ENCODE measurements at regions of chr5 and their contacts with region 1.

Region 1: DNA sequence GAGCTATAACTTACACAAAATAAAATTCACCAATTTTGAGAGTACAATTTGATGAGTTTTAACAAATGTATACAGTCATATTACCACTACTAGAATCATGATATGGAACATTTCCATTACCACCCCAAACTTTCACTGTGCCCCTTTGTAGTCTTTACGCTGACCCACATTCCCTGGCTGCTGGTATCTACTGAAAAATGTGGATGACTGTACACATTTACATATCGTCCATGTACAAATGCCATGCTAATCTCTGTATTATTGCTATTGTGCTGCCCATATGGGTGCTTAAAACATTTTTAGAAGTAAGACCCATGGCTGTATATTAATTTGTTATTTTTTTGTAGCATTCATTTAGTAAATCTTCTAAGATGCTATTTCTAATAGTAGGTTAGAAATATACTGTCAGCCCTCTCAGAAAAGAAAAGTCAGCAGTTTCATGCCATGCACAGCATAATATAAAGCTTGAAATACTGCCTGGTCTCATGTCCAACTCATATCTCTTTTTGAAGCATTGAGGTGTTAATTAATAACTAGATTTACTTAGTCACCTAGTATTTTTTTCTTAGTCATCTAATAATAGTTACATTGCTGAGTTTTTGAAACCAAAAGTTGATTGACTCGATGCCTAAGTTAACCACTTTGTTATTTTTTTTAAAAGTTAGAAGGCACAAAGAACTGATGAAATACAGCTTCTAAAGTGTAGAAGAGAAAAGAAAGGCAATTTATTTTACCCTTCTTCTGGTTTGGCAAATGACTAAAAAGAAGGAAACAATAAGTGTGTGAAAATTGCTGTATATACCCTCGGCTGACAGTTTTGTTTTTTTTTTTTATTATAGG is 188.3 kb upstream of the MEF2C start:
- DNase-seq: peak; percentile 33
- ATAC-seq: peak; percentile 92
- H3K4me3 ChIP-seq: peak overlapping the region; percentile 58
- H3K27ac ChIP-seq: peak overlapping the region; percentile 92
- H3K4me1 ChIP-seq: peaks cover 14% of the 10 kb centered on the region
- H3K27me3 ChIP-seq: no peaks in the 10 kb centered on the region
- CTCF ChIP-seq: no peak
- EP300 ChIP-seq: peak; percentile 52 to 66; a peak in 2 of 4 replicates
- POLR2A ChIP-seq: no peak
- RAD21 ChIP-seq: 0 out of 2 replicates have a peak, but pooled peaks have one; percentile 2

Region 2: DNA sequence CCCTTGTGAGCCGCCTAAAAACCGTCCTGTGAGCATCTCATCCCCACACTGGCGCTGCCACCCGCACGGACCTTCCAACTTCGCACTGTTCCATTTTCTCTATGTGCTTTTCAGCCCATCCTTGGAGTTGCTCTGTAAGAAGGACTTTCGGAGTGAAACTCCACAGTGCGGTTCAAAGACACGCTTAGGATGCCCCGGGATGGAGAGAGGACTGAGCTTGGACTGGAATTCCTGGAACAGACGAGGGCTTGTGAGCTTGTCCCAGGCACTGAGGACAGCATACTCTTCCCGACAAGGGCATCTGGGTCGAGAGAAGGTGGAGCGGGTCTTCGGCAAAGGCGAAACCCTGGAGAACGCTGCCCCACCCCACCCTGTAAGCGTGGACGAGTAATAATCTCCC is 376.1 kb before region 1 on chr5:
- CTCF ChIA-PET with region 1: no interaction called
- POLR2A ChIA-PET with region 1: no interaction called
- RAD21 ChIA-PET with region 1: no interaction called
- SMC1A ChIA-PET with region 1: no interaction called
- in situ Hi-C with region 1: no loop called
- intact Hi-C with region 1: no loop called
- DNase-seq: no peak
- ATAC-seq: no peak
- H3K4me3 ChIP-seq: no peak overlapping the region
- H3K27ac ChIP-seq: no peak overlapping the region
- H3K4me1 ChIP-seq: no peaks in the 10 kb centered on the region; the same call in 1 of the 2 replicates
- H3K27me3 ChIP-seq: peaks cover 18 to 23% of the 10 kb centered on the region in 2 experiments
- CTCF ChIP-seq: no peak
- EP300 ChIP-seq: no peak
- POLR2A ChIP-seq: no peak
- RAD21 ChIP-seq: no peak

Region 3: GRCh38 chr5:89081360-89081759 is 10.0 kb after region 1 on chr5:
- CTCF ChIA-PET with region 1: interaction called, 10 read pairs
- POLR2A ChIA-PET with region 1: interaction called, 7 read pairs
- RAD21 ChIA-PET with region 1: interaction called, 21 read pairs
- SMC1A ChIA-PET with region 1: interaction called, 52 read pairs
- in situ Hi-C with region 1: no loop called
- intact Hi-C with region 1: no loop called
- DNase-seq: peak; percentile 62
- ATAC-seq: peak; percentile 89
- H3K4me3 ChIP-seq: peak overlapping the region; percentile 3; the same call in 1 of the 2 replicates
- H3K27ac ChIP-seq: peak overlapping the region; percentile 55
- H3K4me1 ChIP-seq: peaks cover 11% of the 10 kb centered on the region
- H3K27me3 ChIP-seq: no peaks in the 10 kb centered on the region
- CTCF ChIP-seq: peak in 1 of 3 experiments; percentile 36; a peak in 2 of 6 replicates
- EP300 ChIP-seq: 0 out of 4 replicates have a peak, but pooled peaks of 1 of the 2 experiments have one; percentile 21
- POLR2A ChIP-seq: no peak
- RAD21 ChIP-seq: peak; percentile 54

Region 4: DNA sequence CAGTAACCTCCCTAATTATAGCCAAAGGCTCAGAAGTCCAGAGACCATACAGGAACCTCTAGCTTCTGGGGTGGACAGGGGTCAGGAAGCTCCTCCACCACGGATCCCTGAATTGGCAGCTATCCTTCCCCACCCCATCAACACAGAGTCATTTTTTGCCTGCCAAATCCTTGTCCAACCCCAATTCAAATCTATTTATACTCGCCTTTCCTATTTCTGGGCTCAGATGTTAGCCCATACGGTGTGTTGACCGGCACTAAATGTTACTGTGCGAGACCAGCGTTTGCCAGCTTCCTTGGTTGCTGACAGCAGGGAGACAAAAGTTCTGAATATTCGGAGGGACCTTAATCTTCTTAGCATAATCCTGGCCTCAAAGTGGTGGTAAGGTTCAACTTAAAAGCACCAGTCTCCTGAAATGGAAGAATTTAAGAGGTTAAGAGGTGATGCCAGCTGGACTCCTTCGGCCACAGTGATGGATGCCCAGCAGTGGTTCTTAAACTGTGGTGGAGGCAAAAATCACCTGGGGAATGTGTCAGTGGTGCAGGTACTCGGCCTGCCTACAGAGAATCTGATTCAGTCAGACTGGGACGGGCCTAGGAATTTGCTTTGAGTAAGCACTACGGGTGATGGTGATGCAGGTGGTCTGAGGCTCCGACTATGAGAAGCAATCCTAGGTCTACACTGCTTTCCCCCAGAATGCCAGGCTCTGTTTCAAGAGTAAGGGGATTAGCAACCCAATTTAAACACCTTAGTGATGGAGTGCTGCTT is 16.4 kb after region 1 on chr5:
- CTCF ChIA-PET with region 1: interaction called, 10 read pairs
- POLR2A ChIA-PET with region 1: interaction called, 8 read pairs
- RAD21 ChIA-PET with region 1: interaction called, 13 read pairs
- SMC1A ChIA-PET with region 1: interaction called, 56 read pairs
- in situ Hi-C with region 1: no loop called
- intact Hi-C with region 1: no loop called
- DNase-seq: no peak
- ATAC-seq: peak; percentile 36; the same call in 2 of the 3 replicates
- H3K4me3 ChIP-seq: no peak overlapping the region
- H3K27ac ChIP-seq: no peak overlapping the region
- H3K4me1 ChIP-seq: no peaks in the 10 kb centered on the region
- H3K27me3 ChIP-seq: no peaks in the 10 kb centered on the region
- CTCF ChIP-seq: no peak
- EP300 ChIP-seq: no peak
- POLR2A ChIP-seq: no peak
- RAD21 ChIP-seq: no peak

Region 5: DNA sequence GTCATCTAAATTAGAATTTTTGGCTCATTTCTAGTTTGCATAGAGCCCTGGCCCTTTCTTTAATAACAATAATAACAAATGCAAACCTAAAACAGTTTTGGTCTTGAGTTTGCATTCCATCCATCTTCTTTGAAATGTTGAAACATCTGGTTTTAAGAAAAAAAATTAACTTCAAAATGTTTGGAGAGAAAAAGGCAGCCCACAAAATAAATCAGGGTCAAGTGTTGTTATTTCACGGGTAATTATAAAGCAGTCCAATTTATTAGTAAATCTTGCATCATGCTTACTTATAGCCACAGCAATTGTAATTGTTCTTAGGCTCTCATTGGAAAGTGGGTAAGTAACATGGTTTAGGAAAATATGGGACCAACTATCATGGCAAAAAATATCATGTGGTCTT is 58.6 kb after region 1 on chr5:
- CTCF ChIA-PET with region 1: no interaction called
- POLR2A ChIA-PET with region 1: no interaction called
- RAD21 ChIA-PET with region 1: no interaction called
- SMC1A ChIA-PET with region 1: no interaction called
- in situ Hi-C with region 1: no loop called
- intact Hi-C with region 1: no loop called
- DNase-seq: no peak
- ATAC-seq: no peak
- H3K4me3 ChIP-seq: no peak overlapping the region
- H3K27ac ChIP-seq: no peak overlapping the region
- H3K4me1 ChIP-seq: no peaks in the 10 kb centered on the region
- H3K27me3 ChIP-seq: no peaks in the 10 kb centered on the region
- CTCF ChIP-seq: no peak
- EP300 ChIP-seq: no peak
- POLR2A ChIP-seq: no peak
- RAD21 ChIP-seq: no peak

Measured in GM12878 (cell line).